Activated naive CD4-positive, alpha-beta T cell treated with anti-CD3 and anti-CD28 coated beads for 36 hours (primary cell): ENCODE measurements at regions of chr4 and their contacts with region 1.

Region 1: GRCh38 chr4:46715468-46715867 is 193.6 kb downstream of the COX7B2 start:
- DNase-seq: no peak
- H3K4me3 Mint-ChIP-seq: no peak overlapping the region
- H3K27ac Mint-ChIP-seq: no peak overlapping the region
- H3K4me1 Mint-ChIP-seq: no peaks in the 10 kb centered on the region
- H3K27me3 Mint-ChIP-seq: no peaks in the 10 kb centered on the region

Region 2: DNA sequence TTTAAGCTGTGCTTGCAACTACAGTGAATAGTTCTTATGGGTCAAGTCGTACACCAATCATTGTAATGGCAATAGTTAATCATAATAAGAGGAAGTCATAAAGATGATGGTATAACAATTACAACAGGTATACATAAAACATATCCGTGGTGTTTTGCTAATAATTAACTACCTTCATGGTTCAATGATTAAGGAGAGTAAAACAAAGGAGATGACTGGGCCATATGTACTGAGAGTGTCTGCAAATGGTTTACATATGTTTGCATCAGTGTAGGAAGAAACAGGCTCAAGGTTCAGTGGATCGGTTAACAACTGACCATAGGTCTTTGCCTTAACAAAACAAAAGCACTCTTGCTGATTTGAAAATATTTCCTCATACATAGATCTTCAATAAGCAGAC is 59.4 kb before region 1 on chr4:
- CTCF ChIA-PET with region 1: no interaction called
- intact Hi-C with region 1: loop called (anchors 10 kb)
- DNase-seq: no peak
- H3K4me3 Mint-ChIP-seq: no peak overlapping the region
- H3K27ac Mint-ChIP-seq: no peak overlapping the region
- H3K4me1 Mint-ChIP-seq: no peaks in the 10 kb centered on the region
- H3K27me3 Mint-ChIP-seq: no peaks in the 10 kb centered on the region

Region 3: DNA sequence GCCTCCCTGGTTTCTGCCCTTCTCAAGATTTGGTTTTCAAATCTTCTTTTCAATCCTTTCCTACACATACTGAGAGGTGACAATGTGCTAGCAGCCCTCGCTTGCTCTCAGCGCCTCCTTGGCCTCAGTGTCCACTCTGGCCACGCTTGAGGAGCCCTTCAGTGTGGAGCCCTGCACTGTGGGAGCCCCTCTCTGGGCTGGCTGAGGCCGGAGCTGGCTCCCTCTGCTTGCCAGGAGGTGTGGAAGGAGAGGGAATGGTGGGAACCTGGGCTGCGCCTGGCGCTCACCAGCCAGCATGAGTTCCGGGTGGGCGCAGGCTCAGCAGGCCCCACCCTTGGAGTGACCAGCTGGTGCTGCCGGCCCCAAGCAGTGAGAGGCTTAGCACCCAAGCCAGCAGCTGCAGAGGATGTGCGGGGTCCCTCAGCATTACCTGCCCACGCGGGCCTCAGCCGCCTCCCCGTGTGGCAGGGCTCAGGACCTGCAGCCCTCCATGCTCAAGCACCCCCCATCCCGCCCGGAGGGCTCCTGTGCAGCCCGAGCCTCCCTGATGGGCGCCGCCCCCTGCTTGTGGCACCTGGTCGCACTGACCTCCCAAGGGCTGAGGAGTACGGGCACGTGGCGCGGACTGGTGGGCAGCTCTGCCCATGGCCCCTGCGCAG is 66.1 kb after region 1 on chr4:
- CTCF ChIA-PET with region 1: no interaction called
- intact Hi-C with region 1: no loop called
- DNase-seq: no peak
- H3K4me3 Mint-ChIP-seq: no peak overlapping the region
- H3K27ac Mint-ChIP-seq: no peak overlapping the region
- H3K4me1 Mint-ChIP-seq: no peaks in the 10 kb centered on the region
- H3K27me3 Mint-ChIP-seq: no peaks in the 10 kb centered on the region